B cell (primary cell): ENCODE measurements at regions of chr1 and their contacts with region 1.

Region 1: GRCh38 chr1:63537940-63538339 is 14.6 kb downstream of the EFCAB7 start:
- DNase-seq: peak; percentile 17
- ATAC-seq: no peak
- H3K4me3 ChIP-seq: no peak overlapping the region
- H3K4me3 Mint-ChIP-seq: no peak overlapping the region
- H3K27ac ChIP-seq: no peak overlapping the region
- H3K27ac Mint-ChIP-seq: no peak overlapping the region
- H3K4me1 ChIP-seq: no peaks in the 10 kb centered on the region
- H3K4me1 Mint-ChIP-seq: no peaks in the 10 kb centered on the region
- H3K27me3 ChIP-seq: no peaks in the 10 kb centered on the region
- H3K27me3 Mint-ChIP-seq: no peaks in the 10 kb centered on the region
- CTCF ChIP-seq: peak; percentile 73

Region 2: DNA sequence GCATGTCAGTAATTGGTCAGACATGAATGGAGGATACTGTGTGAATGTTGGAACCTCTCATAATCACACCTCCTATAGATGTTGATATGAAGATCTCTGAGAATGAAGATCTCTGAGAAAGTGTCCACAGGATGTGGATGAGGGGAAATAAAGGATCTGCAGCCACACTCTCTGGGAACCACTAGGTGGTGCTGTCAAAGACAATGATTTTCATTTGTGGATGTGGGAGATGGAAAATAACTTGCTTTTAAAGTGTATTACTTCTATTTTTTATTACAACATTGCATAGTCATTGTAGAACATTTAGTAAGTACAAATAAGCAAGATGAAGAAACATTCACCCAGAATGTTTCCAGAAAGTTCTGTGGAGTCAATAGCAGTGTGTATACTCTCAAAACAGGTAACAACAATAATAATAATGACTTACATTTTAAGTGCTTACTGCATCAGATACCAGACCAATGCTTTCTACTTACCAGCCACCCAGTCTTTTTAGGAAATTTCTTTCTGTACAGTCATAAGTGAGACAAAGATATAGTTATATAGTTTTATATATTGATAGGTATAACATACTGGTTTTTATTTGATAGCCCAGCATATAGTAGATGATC is 625.8 kb before region 1 on chr1:
- CTCF ChIA-PET with region 1: interaction called, 5 read pairs
- POLR2A ChIA-PET with region 1: no interaction called
- intact Hi-C with region 1: loop called (anchors 5 kb)
- DNase-seq: peak; percentile 4
- ATAC-seq: no peak
- H3K4me3 ChIP-seq: no peak overlapping the region
- H3K4me3 Mint-ChIP-seq: no peak overlapping the region
- H3K27ac ChIP-seq: no peak overlapping the region
- H3K27ac Mint-ChIP-seq: no peak overlapping the region
- H3K4me1 ChIP-seq: no peaks in the 10 kb centered on the region
- H3K4me1 Mint-ChIP-seq: no peaks in the 10 kb centered on the region
- H3K27me3 ChIP-seq: peaks cover 0 to 11% (median 0%) of the 10 kb centered on the region in 4 experiments
- H3K27me3 Mint-ChIP-seq: peaks cover 15% of the 10 kb centered on the region
- CTCF ChIP-seq: peak; percentile 75

Region 3: GRCh38 chr1:63316984-63317816 is 220.7 kb before region 1 on chr1:
- CTCF ChIA-PET with region 1: interaction called, 3 read pairs
- POLR2A ChIA-PET with region 1: no interaction called
- intact Hi-C with region 1: loop called (anchors 5 kb)
- DNase-seq: peak; percentile 70
- ATAC-seq: peak; percentile 74
- H3K4me3 ChIP-seq: peak overlapping the region; percentile 3 to 59 (median 42)
- H3K4me3 Mint-ChIP-seq: peak overlapping the region; percentile 66
- H3K27ac ChIP-seq: no peak overlapping the region
- H3K27ac Mint-ChIP-seq: no peak overlapping the region
- H3K4me1 ChIP-seq: peaks cover 43 to 52% of the 10 kb centered on the region in 2 donors
- H3K4me1 Mint-ChIP-seq: peaks cover 28% of the 10 kb centered on the region
- H3K27me3 ChIP-seq: peaks cover 0 to 74% (median 60%) of the 10 kb centered on the region in 4 experiments
- H3K27me3 Mint-ChIP-seq: peaks cover 66% of the 10 kb centered on the region
- CTCF ChIP-seq: peak; percentile 54

Region 4: DNA sequence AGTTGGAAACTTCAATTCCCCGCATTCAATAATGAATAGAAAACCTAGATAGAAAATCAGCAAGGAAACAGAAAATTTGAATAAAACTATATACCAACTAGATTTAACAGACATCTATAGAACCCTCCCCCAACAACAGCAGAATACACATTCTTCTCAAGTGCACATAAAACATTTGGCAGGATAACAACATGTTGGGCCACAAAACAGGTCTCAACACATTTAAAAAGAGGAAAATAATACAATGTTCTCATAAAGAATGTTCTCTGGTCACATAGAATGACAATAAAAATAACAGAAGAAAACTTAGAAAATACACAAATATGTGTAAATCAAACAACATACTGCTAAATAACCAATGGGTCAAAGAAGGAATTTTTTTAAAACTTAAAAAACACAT is 39.8 kb before region 1 on chr1:
- CTCF ChIA-PET with region 1: no interaction called
- POLR2A ChIA-PET with region 1: no interaction called
- intact Hi-C with region 1: no loop called
- DNase-seq: no peak
- ATAC-seq: no peak
- H3K4me3 ChIP-seq: no peak overlapping the region
- H3K4me3 Mint-ChIP-seq: no peak overlapping the region
- H3K27ac ChIP-seq: no peak overlapping the region
- H3K27ac Mint-ChIP-seq: no peak overlapping the region
- H3K4me1 ChIP-seq: no peaks in the 10 kb centered on the region
- H3K4me1 Mint-ChIP-seq: no peaks in the 10 kb centered on the region
- H3K27me3 ChIP-seq: no peaks in the 10 kb centered on the region
- H3K27me3 Mint-ChIP-seq: no peaks in the 10 kb centered on the region
- CTCF ChIP-seq: no peak

Region 5: DNA sequence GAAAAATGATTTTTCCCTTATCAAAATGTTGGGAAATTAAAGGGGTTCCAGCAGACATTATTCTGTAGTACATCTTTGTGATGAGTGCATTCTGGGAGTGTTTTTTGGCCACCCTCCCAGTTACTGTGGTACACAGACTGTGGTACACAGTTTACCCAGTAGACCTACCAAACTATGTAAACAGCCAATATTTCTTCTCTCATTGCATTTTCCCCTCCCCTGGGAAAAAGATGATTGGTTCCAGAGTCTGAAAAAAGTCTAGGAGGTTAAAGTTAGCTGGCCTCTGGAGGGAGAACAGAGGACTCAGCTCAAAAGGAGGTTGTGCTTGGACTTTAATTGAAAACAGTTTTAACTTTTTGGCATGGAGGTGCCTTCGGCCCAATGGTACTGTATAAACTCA is 97.7 kb after region 1 on chr1:
- CTCF ChIA-PET with region 1: no interaction called
- POLR2A ChIA-PET with region 1: no interaction called
- intact Hi-C with region 1: no loop called
- DNase-seq: no peak
- ATAC-seq: no peak
- H3K4me3 ChIP-seq: no peak overlapping the region
- H3K4me3 Mint-ChIP-seq: no peak overlapping the region
- H3K27ac ChIP-seq: no peak overlapping the region
- H3K27ac Mint-ChIP-seq: no peak overlapping the region
- H3K4me1 ChIP-seq: no peaks in the 10 kb centered on the region
- H3K4me1 Mint-ChIP-seq: no peaks in the 10 kb centered on the region
- H3K27me3 ChIP-seq: no peaks in the 10 kb centered on the region
- H3K27me3 Mint-ChIP-seq: no peaks in the 10 kb centered on the region
- CTCF ChIP-seq: no peak